Activated naive CD4-positive, alpha-beta T cell treated with anti-CD3 and anti-CD28 coated beads for 36 hours (primary cell): ENCODE measurements at regions of chr11 and their contacts with region 1.

Region 1: GRCh38 chr11:76721755-76722677 is 51.5 kb upstream of the LRRC32 start:
- DNase-seq: peak; percentile 86
- H3K4me3 Mint-ChIP-seq: peak overlapping the region; percentile 13
- H3K27ac Mint-ChIP-seq: no peak overlapping the region
- H3K4me1 Mint-ChIP-seq: peaks cover 5% of the 10 kb centered on the region
- H3K27me3 Mint-ChIP-seq: peaks cover 16% of the 10 kb centered on the region

Region 2: GRCh38 chr11:76782526-76783293 is 60.7 kb after region 1 on chr11:
- CTCF ChIA-PET with region 1: no interaction called
- intact Hi-C with region 1: loop called (anchors 5 kb)
- DNase-seq: peak; percentile 67
- H3K4me3 Mint-ChIP-seq: peak overlapping the region; percentile 63
- H3K27ac Mint-ChIP-seq: peak overlapping the region; percentile 65
- H3K4me1 Mint-ChIP-seq: peaks cover 8% of the 10 kb centered on the region
- H3K27me3 Mint-ChIP-seq: peaks cover 32% of the 10 kb centered on the region

Region 3: DNA sequence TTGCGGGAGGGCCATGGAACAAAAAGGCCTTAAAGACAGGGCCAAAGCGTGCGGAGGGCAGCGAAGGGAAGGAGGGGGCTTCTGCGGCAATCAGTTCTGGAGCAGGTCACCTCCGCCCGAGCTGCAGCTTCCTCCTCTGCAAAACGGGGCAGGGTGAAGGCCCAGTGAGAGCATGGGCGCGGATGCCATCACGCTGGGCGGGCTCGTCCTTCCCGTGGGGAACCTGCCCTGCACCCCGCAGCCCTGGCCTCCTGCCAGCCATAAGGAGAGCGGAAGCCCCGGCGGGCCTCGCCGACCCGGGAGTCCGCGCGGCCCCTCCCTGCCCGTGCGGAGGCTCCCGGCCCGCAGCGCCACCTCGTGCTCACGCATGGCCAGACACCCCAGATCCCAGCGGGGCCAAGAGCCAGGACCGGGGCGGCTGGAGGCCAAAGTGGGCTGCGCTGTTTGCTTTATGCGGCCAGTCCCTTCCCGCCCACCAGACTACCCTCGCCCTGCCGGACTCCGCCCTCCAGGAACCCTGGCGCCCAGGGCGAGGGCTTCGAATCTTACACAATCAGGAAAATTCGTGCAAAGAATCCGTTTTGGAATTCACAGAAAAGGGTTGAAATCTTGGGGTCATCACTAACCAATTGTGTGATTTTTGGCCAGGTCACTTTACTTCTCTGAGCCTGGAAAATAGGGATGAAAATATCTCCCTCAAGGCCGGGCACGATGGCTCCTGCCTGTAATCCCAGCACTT is 77.2 kb after region 1 on chr11:
- CTCF ChIA-PET with region 1: interaction called, 74 read pairs
- intact Hi-C with region 1: loop called (anchors 1 kb)
- DNase-seq: peak; percentile 79
- H3K4me3 Mint-ChIP-seq: peak overlapping the region; percentile 18
- H3K27ac Mint-ChIP-seq: no peak overlapping the region
- H3K4me1 Mint-ChIP-seq: peaks cover 14% of the 10 kb centered on the region
- H3K27me3 Mint-ChIP-seq: no peaks in the 10 kb centered on the region

Region 4: DNA sequence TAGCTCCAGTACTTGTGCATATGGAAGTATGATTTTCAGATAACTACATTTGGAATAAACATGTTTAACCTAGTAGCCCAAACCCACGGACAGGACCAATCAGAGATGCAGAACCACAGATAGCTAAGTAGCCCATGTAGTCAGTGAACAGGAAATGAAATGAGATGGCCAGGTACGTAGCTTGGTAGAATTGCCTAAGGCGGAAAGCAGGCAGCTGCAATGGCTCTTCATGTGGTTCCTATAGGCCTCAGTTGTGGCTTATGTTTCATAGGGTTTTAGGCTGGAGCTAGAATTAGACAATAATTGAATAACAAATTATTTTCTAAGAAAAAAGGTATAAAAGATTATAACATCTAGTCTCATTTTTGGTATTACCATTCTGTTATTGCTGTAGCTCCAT is 225.8 kb after region 1 on chr11:
- CTCF ChIA-PET with region 1: no interaction called
- intact Hi-C with region 1: no loop called
- DNase-seq: no peak
- H3K4me3 Mint-ChIP-seq: no peak overlapping the region
- H3K27ac Mint-ChIP-seq: no peak overlapping the region
- H3K4me1 Mint-ChIP-seq: no peaks in the 10 kb centered on the region
- H3K27me3 Mint-ChIP-seq: no peaks in the 10 kb centered on the region

Region 5: GRCh38 chr11:77908835-77909234 is 1186.8 kb after region 1 on chr11:
- CTCF ChIA-PET with region 1: no interaction called
- intact Hi-C with region 1: no loop called
- DNase-seq: no peak
- H3K4me3 Mint-ChIP-seq: no peak overlapping the region
- H3K27ac Mint-ChIP-seq: no peak overlapping the region
- H3K4me1 Mint-ChIP-seq: no peaks in the 10 kb centered on the region
- H3K27me3 Mint-ChIP-seq: no peaks in the 10 kb centered on the region